Heart right ventricle (tissue), 16 donors: ENCODE measurements at regions of chr15 and their contacts with region 1.

Region 1: GRCh38 chr15:34223904-34224596 is 766 bp upstream of the EMC4 start:
- DNase-seq: peak in 1 of 2 donors; percentile 5
- ATAC-seq: peak in 7 of 8 donors; percentile 4 to 44 (median 17)
- H3K4me3 ChIP-seq: peak overlapping the region; percentile 62 to 94 (median 82)
- H3K27ac ChIP-seq: peak overlapping the region; percentile 76 to 97 (median 94)
- H3K4me1 ChIP-seq: peaks cover 3 to 26% (median 19%) of the 10 kb centered on the region in 9 donors
- H3K27me3 ChIP-seq: no peaks in the 10 kb centered on the region
- CTCF ChIP-seq: no peak

Region 2: GRCh38 chr15:34342737-34343575 is 118.9 kb after region 1 on chr15 and contains the starts of genes NOP10 and NUTM1:
- intact Hi-C with region 1: loop called in 2 of 10 experiments (anchors 2 to 5 kb)
- DNase-seq: peak; percentile 92 to 93
- ATAC-seq: peak; percentile 91 to 97 (median 96)
- H3K4me3 ChIP-seq: peak within 1 kb of the TSS; percentile 56 to 92 (median 76)
- H3K27ac ChIP-seq: peak within 1 kb of the TSS; percentile 14 to 94 (median 92)
- H3K4me1 ChIP-seq: peaks cover 0 to 45% (median 19%) of the 10 kb centered on the region in 9 donors
- H3K27me3 ChIP-seq: no peaks in the 10 kb centered on the region
- CTCF ChIP-seq: peak; percentile 92 to 97 (median 96)
- total RNA-seq, gene NOP10: 92.3 to 159 (median 119) TPM
- total RNA-seq, gene NUTM1: not detected

Region 3: DNA sequence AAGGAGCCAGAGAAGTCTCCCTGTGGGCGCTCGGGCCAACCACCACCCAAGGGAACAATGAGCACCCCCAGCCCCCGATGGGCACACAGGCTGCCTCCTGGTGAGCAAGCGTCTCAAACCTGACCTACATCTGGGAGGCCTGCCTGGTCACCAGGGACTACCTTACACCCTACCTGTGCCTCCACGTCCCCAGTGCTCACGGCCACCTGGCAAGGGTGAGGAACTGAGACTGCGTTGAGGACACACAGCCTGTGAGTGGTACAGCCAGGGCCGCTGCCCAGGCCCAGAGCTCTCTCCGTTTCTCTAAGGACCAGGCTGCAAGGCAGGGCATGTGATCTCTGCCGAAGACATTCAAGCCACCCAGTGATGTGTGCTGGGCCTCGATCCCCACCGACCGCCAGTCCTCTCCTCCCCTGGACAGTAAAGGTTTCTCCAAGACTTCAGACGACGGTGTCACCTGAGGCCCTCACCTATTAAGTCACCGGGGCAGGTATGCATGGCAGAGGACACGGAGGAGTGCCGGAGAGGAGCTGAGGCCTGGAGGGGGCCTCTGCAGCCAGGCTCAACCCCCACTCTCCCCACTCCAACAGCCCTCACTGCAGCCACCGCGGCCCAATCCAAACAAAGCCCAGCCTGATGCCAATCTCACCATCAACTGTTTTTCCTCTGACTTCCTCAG is 210.7 kb after region 1 on chr15:
- intact Hi-C with region 1: no loop called
- DNase-seq: no peak
- ATAC-seq: no peak
- H3K4me3 ChIP-seq: no peak overlapping the region
- H3K27ac ChIP-seq: no peak overlapping the region
- H3K4me1 ChIP-seq: peaks cover 0 to 22% (median 6%) of the 10 kb centered on the region in 9 donors
- H3K27me3 ChIP-seq: peaks cover 0 to 36% (median 0%) of the 10 kb centered on the region in 7 donors
- CTCF ChIP-seq: no peak